Right ventricle myocardium superior (tissue), 1 donor: ENCODE measurements at regions of chrX and their contacts with region 1.

Region 1: DNA sequence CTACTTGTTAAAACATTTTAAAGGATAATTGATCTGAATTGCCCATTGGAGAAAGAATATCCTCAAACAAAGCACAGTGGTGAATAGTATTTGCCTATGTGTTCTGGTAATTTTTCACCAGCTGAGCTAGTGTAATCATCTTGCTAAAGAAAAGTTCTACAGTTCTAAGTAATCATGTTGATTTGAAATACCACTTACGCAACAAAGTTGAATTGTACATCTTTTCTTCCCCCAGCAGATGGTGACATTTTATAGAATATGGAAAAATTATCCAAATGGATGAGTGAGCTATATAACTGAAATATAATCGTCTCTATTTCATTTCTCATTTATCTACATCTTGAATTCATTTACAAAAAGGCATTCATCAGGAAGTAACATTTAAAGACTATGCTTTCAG is 9.7 kb upstream of the ZNF674 start:
- DNase-seq: no peak
- ATAC-seq: no peak

Region 2: DNA sequence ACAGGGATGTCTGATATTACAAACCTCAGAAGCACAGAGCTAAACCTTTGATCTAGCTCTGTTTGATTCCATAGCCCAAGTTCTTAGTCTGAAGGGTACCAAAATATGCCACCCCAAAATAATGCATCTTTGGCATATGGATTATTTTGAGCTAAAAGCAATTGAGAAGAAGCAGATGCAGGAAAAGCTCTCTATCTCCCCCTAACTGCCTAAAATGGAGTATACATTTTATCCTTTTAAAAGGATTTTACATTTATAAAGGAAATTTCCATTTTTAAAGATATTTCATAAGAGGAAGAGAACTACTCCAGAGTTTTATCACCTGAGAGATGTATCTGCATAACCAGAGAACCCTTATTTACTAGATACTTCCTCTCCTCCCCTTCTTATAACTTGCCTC is 168.4 kb before region 1 on chrX:
- intact Hi-C with region 1: no loop called
- DNase-seq: no peak
- ATAC-seq: no peak

Region 3: DNA sequence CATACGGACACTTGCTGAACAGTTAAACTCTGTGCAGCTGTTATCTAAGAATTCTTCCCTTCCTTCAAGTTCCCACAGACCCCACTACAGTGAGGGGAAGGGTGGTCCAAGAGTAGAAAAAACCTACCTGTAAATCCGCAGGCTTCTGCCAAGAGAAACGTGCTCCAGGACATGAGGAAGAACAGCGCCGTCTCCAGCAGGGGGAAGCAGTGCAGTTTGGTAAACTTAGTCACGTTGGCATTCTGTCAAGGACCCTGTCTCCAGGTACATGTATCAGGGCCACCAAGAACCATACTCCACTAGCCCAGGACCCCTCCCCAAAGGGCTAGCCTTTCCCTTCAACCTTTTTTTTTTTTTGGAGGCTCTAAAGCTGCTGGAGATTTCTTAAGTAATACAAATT is 98.5 kb after region 1 on chrX:
- intact Hi-C with region 1: no loop called
- DNase-seq: no peak
- ATAC-seq: no peak

Region 4: GRCh38 chrX:46686003-46686645 is 131.2 kb after region 1 on chrX:
- intact Hi-C with region 1: loop called (anchors 10 kb)
- DNase-seq: no peak
- ATAC-seq: peak; percentile 80